MCF 10A (cell line): ENCODE measurements at regions of chr17 and their contacts with region 1.

Region 1: GRCh38 chr17:81346090-81346907 is 49.0 kb upstream of the BAHCC1 start:
- DNase-seq: peak; percentile 95
- H3K4me3 Mint-ChIP-seq: peak overlapping the region; percentile 95
- H3K27ac Mint-ChIP-seq: no peak overlapping the region
- H3K4me1 Mint-ChIP-seq: peaks cover 16% of the 10 kb centered on the region
- H3K27me3 Mint-ChIP-seq: no peaks in the 10 kb centered on the region
- CTCF ChIP-seq: no peak

Region 2: DNA sequence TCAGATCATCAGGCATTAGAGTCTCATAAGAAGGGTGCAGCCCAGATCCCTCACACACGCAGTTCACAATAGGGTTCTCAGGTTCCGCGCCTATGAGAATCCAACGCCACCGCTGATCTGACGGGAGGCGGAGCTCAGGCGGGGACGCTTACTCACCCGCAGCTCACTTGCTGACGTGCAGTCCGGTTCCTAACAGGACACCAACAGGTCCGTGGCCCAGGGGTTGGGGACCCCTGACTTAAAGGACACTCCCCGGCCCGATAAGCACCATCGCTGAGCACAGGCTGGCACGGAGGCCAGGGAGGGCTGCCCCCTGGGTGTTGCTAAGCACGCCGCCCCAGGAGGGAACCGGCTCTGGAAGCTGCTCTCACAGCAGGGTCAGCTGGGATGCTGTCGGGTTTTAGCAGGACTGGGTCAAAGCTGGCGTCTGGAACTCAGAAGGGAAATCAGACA is 18.9 kb after region 1 on chr17:
- CTCF ChIA-PET with region 1: interaction called, 4 read pairs
- POLR2A ChIA-PET with region 1: interaction called, 7 read pairs
- intact Hi-C with region 1: loop called (anchors 1 kb)
- DNase-seq: peak; percentile 90
- H3K4me3 Mint-ChIP-seq: peak overlapping the region; percentile 60
- H3K27ac Mint-ChIP-seq: peak overlapping the region; percentile 69
- H3K4me1 Mint-ChIP-seq: peaks cover 24% of the 10 kb centered on the region
- H3K27me3 Mint-ChIP-seq: no peaks in the 10 kb centered on the region
- CTCF ChIP-seq: no peak

Region 3: GRCh38 chr17:81387100-81388090 is 41.1 kb after region 1 on chr17:
- CTCF ChIA-PET with region 1: no interaction called
- POLR2A ChIA-PET with region 1: no interaction called
- intact Hi-C with region 1: no loop called
- DNase-seq: peak; percentile 27
- H3K4me3 Mint-ChIP-seq: peak overlapping the region; percentile 69
- H3K27ac Mint-ChIP-seq: no peak overlapping the region
- H3K4me1 Mint-ChIP-seq: no peaks in the 10 kb centered on the region
- H3K27me3 Mint-ChIP-seq: no peaks in the 10 kb centered on the region
- CTCF ChIP-seq: no peak

Region 4: GRCh38 chr17:81621494-81622130 is 275.3 kb after region 1 on chr17:
- CTCF ChIA-PET with region 1: no interaction called
- POLR2A ChIA-PET with region 1: no interaction called
- intact Hi-C with region 1: no loop called
- DNase-seq: no peak
- H3K4me3 Mint-ChIP-seq: no peak overlapping the region
- H3K27ac Mint-ChIP-seq: no peak overlapping the region
- H3K4me1 Mint-ChIP-seq: no peaks in the 10 kb centered on the region
- H3K27me3 Mint-ChIP-seq: no peaks in the 10 kb centered on the region
- CTCF ChIP-seq: no peak